ENCODE measurements at regions of chr9 and their contacts with region 1.

Region 1: DNA sequence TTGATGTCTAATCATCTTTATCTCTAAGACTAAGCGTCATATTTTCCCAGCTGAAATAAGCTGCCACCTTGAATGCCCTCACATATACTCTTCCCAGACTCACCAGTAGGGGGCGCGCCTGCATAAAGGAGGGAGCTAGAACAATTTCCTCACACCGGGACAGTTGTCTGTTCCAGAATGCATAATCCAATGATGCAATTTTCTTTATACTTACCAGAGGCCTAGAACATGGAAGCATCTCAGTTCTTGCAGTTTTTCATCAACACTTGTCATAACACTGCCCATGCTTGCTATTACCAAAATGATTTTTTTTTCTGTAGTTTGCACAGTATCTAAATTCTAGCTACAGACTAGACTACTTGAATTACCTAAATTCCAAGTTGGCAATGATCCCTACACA is 203.9 kb downstream of the FRMD3 start:
- DNase-seq: peak; percentile 11
- ATAC-seq: peak; percentile 96
- H3K4me3 ChIP-seq: no peak overlapping the region
- H3K27ac ChIP-seq: no peak overlapping the region
- H3K4me1 ChIP-seq: no peaks in the 10 kb centered on the region
- H3K27me3 ChIP-seq: no peaks in the 10 kb centered on the region
- CTCF ChIP-seq: peak; percentile 86 to 87 (median 86)
- EP300 ChIP-seq: no peak
- POLR2A ChIP-seq: no peak
- RAD21 ChIP-seq: peak; percentile 95

Region 2: GRCh38 chr9:83392228-83392627 is 57.9 kb after region 1 on chr9:
- CTCF ChIA-PET with region 1: no interaction called
- POLR2A ChIA-PET with region 1: no interaction called
- RAD21 ChIA-PET with region 1: no interaction called
- SMC1A ChIA-PET with region 1: no interaction called
- in situ Hi-C with region 1: loop called (anchors 10 kb)
- intact Hi-C with region 1: no loop called
- DNase-seq: no peak
- ATAC-seq: no peak
- H3K4me3 ChIP-seq: no peak overlapping the region
- H3K27ac ChIP-seq: no peak overlapping the region
- H3K4me1 ChIP-seq: no peaks in the 10 kb centered on the region
- H3K27me3 ChIP-seq: no peaks in the 10 kb centered on the region
- CTCF ChIP-seq: no peak
- EP300 ChIP-seq: no peak
- POLR2A ChIP-seq: no peak
- RAD21 ChIP-seq: no peak

Region 3: GRCh38 chr9:83535736-83536135 is 201.4 kb after region 1 on chr9:
- CTCF ChIA-PET with region 1: interaction called, 401 read pairs
- POLR2A ChIA-PET with region 1: no interaction called
- RAD21 ChIA-PET with region 1: interaction called, 211 read pairs
- SMC1A ChIA-PET with region 1: interaction called, 198 read pairs
- in situ Hi-C with region 1: no loop called
- intact Hi-C with region 1: no loop called
- DNase-seq: no peak
- ATAC-seq: no peak
- H3K4me3 ChIP-seq: no peak overlapping the region
- H3K27ac ChIP-seq: no peak overlapping the region
- H3K4me1 ChIP-seq: no peaks in the 10 kb centered on the region
- H3K27me3 ChIP-seq: peaks cover 0 to 5% of the 10 kb centered on the region in 2 experiments; a peak in 3 of 4 replicates
- CTCF ChIP-seq: no peak
- EP300 ChIP-seq: no peak
- POLR2A ChIP-seq: no peak
- RAD21 ChIP-seq: no peak

Region 4: GRCh38 chr9:83557317-83557716 is 223.0 kb after region 1 on chr9:
- CTCF ChIA-PET with region 1: interaction called, 21 read pairs
- POLR2A ChIA-PET with region 1: interaction called, 3 read pairs
- RAD21 ChIA-PET with region 1: interaction called, 8 read pairs
- SMC1A ChIA-PET with region 1: interaction called, 3 read pairs
- in situ Hi-C with region 1: no loop called
- intact Hi-C with region 1: no loop called
- DNase-seq: no peak
- ATAC-seq: no peak
- H3K4me3 ChIP-seq: no peak overlapping the region
- H3K27ac ChIP-seq: no peak overlapping the region
- H3K4me1 ChIP-seq: no peaks in the 10 kb centered on the region
- H3K27me3 ChIP-seq: no peaks in the 10 kb centered on the region
- CTCF ChIP-seq: no peak
- EP300 ChIP-seq: no peak
- POLR2A ChIP-seq: no peak
- RAD21 ChIP-seq: no peak

Region 5: GRCh38 chr9:83622939-83623678 is 288.8 kb after region 1 on chr9 and contains the start of gene IDNK:
- CTCF ChIA-PET with region 1: interaction called, 13 read pairs
- POLR2A ChIA-PET with region 1: no interaction called
- RAD21 ChIA-PET with region 1: interaction called, 8 read pairs
- SMC1A ChIA-PET with region 1: interaction called, 6 read pairs
- in situ Hi-C with region 1: no loop called
- intact Hi-C with region 1: no loop called
- DNase-seq: no peak
- ATAC-seq: peak; percentile 94
- H3K4me3 ChIP-seq: peak within 1 kb of the TSS; percentile 97
- H3K27ac ChIP-seq: peak within 1 kb of the TSS; percentile 91
- H3K4me1 ChIP-seq: peaks cover 6% of the 10 kb centered on the region; the same call in 1 of the 2 replicates
- H3K27me3 ChIP-seq: no peaks in the 10 kb centered on the region
- CTCF ChIP-seq: no peak
- EP300 ChIP-seq: no peak
- POLR2A ChIP-seq: peak; percentile 93
- RAD21 ChIP-seq: no peak
- polyA plus RNA-seq, gene IDNK: 8.7 to 8.9 TPM

Region 6: DNA sequence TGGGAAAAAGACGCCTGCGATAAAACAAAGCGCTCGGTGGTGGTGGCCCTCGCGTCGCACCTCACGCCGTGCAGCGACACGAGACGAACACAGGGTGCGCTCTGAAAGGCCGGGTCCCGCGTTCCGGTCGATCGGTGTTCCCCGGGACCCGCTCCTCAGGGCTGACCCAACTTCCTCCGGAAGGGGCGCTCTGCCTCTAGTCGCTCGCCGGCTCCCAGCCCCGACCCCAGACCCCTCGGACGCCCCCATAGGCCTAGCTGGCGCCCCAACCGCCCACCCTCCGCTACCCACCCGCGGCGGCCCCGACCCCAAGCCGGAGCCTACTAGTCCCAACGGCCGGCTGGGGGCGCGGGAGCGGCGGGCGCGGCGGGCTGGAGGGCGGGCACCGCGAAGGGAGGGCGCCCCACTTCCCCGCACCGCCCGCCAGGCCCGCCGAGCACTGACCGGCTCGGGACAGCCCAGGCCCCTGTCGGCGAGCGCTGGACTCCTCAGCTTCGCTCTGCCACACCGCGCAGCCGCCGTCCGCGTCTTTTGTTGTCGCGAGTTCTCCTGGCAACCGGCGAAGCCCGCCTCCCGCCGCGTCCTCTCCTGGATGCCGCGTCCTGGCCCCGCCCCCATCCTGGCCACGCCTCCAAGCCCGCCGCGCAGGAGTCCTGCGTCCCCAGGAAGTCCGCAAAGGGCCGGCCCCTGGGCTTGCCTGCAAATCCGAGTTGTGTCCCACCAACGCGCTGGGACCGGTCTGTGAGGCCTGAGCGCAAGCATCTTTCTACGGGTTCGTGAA is 586.8 kb after region 1 on chr9 and contains the start of gene KIF27:
- CTCF ChIA-PET with region 1: no interaction called
- POLR2A ChIA-PET with region 1: no interaction called
- RAD21 ChIA-PET with region 1: no interaction called
- SMC1A ChIA-PET with region 1: interaction called, 3 read pairs
- in situ Hi-C with region 1: loop called (anchors 5 kb)
- intact Hi-C with region 1: no loop called
- DNase-seq: peak; percentile 80
- ATAC-seq: peak; percentile 95
- H3K4me3 ChIP-seq: peak within 1 kb of the TSS; percentile 79
- H3K27ac ChIP-seq: peak within 1 kb of the TSS; percentile 79
- H3K4me1 ChIP-seq: peaks cover 9% of the 10 kb centered on the region
- H3K27me3 ChIP-seq: no peaks in the 10 kb centered on the region
- CTCF ChIP-seq: peak in 2 of 3 experiments; percentile 11 to 19; a peak in 3 of 6 replicates
- EP300 ChIP-seq: no peak
- POLR2A ChIP-seq: peak; percentile 81
- RAD21 ChIP-seq: no peak
- polyA plus RNA-seq, gene KIF27: 0.64 to 0.92 TPM